ENCODE measurements at regions of chr11 and their contacts with region 1.

Region 1: GRCh38 chr11:113314389-113315301 is at the start of gene TTC12:
- DNase-seq: peak; percentile 94
- H3K4me3 ChIP-seq: peak within 1 kb of the TSS; percentile 68 to 95 (median 89)
- H3K27ac ChIP-seq: peak within 1 kb of the TSS; percentile 95
- H3K4me1 ChIP-seq: peaks cover 35% of the 10 kb centered on the region
- H3K27me3 ChIP-seq: no peaks in the 10 kb centered on the region
- CTCF ChIP-seq: no peak
- total RNA-seq, gene TTC12: 32.5 to 36.5 TPM

Region 2: DNA sequence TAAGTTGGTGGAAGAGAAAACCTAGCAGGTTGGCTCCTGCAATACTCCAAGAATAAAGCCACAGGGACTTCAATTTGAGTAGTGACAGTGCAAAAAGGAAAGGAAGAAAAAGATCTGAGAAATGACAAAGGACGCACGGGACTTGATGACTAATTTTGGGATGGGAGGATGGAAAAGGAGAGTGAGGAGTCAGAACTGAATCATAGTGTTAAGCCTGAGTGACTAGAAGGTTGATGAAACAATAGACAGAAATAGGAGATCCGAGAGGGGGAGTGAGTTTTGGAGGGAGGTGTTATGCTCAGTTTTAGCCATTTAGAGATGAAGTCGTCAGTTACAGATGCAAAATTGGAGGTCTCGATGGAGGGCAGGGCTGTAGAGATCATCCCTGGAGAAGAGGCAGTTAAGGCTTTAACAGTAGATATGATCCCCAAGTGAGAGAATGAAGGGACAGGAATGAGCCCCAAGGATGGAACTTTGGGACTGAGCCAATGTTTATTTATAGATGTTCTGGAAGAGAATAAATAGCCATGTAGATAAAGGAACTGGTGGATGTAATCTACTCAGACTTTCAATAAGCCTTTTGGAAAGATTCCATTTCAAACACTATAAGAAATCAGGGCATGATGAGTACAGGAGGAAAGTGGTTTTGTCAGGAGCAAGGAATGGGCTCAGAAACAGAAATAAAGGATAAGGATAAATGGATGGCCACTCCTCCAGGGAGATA is 462.3 kb before region 1 on chr11:
- CTCF ChIA-PET with region 1: no interaction called
- dilution Hi-C with region 1: no loop called
- in situ Hi-C with region 1: no loop called
- intact Hi-C with region 1: no loop called
- DNase-seq: peak; percentile 79
- H3K4me3 ChIP-seq: no peak overlapping the region
- H3K27ac ChIP-seq: no peak overlapping the region
- H3K4me1 ChIP-seq: peaks cover 25% of the 10 kb centered on the region
- H3K27me3 ChIP-seq: no peaks in the 10 kb centered on the region
- CTCF ChIP-seq: no peak

Region 3: DNA sequence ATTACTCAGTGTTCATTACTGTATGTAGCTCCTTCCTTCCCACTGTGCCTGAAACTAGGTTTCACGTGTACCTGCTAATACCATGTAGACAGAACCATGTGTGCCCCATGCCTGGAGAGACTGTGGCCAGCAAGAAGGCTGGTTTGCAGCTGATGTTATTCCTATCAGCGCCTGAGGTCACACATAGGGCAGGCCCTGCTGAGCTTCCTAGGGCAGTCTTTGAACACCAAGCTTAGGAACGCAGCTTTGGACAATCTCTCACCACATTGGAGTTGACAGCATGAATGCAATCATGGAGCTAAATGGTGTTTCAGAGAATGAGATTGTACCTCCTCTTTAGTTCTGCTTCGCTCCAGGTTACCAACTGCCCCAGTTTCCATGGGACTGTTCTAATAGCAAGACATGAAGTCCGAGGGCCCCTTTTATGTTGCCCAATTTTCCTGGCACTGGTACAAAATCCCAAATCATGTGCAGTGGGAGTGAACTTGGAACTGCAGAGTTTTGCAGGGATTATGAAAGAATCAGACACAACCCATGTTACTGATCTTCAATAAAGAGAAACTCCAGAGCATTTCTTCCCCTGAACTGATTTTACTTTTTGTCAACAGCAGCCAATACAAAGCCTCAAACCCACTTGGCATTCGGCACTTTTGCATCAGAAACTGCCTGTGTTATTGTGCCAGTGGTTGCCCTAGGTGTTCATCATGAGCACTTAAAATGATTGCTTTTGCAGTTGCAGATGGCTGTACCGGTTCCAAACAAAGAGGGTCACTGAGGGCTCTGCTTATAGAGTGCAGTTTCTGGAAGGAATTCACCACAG is 154.4 kb before region 1 on chr11:
- CTCF ChIA-PET with region 1: no interaction called
- dilution Hi-C with region 1: no loop called
- in situ Hi-C with region 1: no loop called
- intact Hi-C with region 1: no loop called
- DNase-seq: no peak
- H3K4me3 ChIP-seq: no peak overlapping the region
- H3K27ac ChIP-seq: no peak overlapping the region
- H3K4me1 ChIP-seq: no peaks in the 10 kb centered on the region
- H3K27me3 ChIP-seq: no peaks in the 10 kb centered on the region
- CTCF ChIP-seq: no peak

Region 4: DNA sequence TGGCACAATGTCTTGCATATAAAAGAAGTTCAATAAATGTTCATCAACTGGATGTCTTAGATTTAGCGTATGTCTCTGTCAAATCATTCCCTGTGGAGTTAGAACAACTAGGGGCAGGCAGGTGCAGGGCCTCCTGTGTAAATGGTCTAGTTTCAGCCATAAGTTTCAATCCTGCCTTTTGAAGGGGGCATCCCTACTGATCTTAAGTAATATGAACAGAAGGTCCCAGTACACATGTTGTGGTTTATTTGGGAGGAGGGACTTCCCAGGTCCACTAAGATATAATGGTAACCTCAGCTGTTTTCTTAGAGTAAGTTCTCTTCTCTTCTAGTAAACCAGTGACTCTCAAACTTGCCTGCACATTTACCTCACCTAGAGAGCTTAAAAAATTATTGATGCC is 19.5 kb after region 1 on chr11:
- CTCF ChIA-PET with region 1: no interaction called
- dilution Hi-C with region 1: no loop called
- in situ Hi-C with region 1: no loop called
- intact Hi-C with region 1: no loop called
- DNase-seq: no peak
- H3K4me3 ChIP-seq: no peak overlapping the region
- H3K27ac ChIP-seq: no peak overlapping the region
- H3K4me1 ChIP-seq: no peaks in the 10 kb centered on the region
- H3K27me3 ChIP-seq: no peaks in the 10 kb centered on the region
- CTCF ChIP-seq: no peak

Region 5: DNA sequence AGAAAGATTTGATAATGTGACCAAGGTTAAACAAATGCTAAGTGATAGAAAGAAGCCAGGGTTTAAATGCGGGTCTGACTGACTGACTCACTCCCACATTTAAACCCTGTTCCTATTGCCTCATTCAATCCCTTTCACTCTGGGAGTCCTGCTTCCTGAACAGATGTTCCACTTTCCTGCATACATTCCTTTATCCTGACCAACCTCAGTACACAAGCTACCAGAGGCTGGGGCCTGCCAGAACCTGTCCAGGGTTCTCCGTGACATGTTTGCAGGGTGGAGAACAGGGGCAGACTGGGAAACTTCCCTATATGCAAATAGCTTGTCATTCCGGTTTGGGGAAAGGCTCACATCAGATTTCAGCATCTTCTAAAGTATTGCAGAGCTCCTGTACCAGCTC is 69.9 kb after region 1 on chr11:
- CTCF ChIA-PET with region 1: no interaction called
- dilution Hi-C with region 1: no loop called
- in situ Hi-C with region 1: loop called in 1 of 2 experiments (anchors 10 kb)
- intact Hi-C with region 1: loop called (anchors 2 kb)
- DNase-seq: peak; percentile 100
- H3K4me3 ChIP-seq: no peak overlapping the region
- H3K27ac ChIP-seq: peak overlapping the region; percentile 85
- H3K4me1 ChIP-seq: peaks cover 41% of the 10 kb centered on the region
- H3K27me3 ChIP-seq: no peaks in the 10 kb centered on the region
- CTCF ChIP-seq: no peak

Region 6: DNA sequence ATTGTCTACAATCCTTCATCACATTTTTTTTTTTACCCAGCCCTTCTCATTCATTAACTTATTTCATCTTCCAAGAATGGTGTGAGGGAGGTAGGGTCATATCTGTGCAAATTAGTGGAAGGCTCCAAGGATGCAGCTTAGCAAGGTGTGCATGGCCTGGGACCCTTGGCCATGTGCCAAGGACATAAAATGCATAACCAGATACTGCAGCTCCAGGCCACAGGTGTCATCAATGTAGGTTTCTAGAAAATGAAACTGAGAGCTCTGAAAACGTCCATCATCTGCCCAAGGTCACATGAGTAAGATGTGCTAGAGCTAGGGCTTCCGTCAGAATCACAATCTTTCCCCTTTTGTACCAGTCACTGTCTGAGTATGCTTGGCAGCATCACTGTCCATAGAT is 102.8 kb after region 1 on chr11:
- CTCF ChIA-PET with region 1: no interaction called
- dilution Hi-C with region 1: loop called (anchors 5 kb)
- in situ Hi-C with region 1: no loop called
- intact Hi-C with region 1: no loop called
- DNase-seq: no peak
- H3K4me3 ChIP-seq: no peak overlapping the region
- H3K27ac ChIP-seq: no peak overlapping the region
- H3K4me1 ChIP-seq: no peaks in the 10 kb centered on the region
- H3K27me3 ChIP-seq: no peaks in the 10 kb centered on the region
- CTCF ChIP-seq: no peak

Region 7: GRCh38 chr11:113514856-113515255 is 200.2 kb after region 1 on chr11:
- CTCF ChIA-PET with region 1: no interaction called
- dilution Hi-C with region 1: loop called (anchors 5 kb)
- in situ Hi-C with region 1: no loop called
- intact Hi-C with region 1: no loop called
- DNase-seq: peak; percentile 68
- H3K4me3 ChIP-seq: no peak overlapping the region
- H3K27ac ChIP-seq: peak overlapping the region; percentile 26
- H3K4me1 ChIP-seq: peaks cover 25% of the 10 kb centered on the region
- H3K27me3 ChIP-seq: no peaks in the 10 kb centered on the region
- CTCF ChIP-seq: no peak